IMR-90 (cell line): ENCODE measurements at regions of chr20 and their contacts with region 1.

Region 1: DNA sequence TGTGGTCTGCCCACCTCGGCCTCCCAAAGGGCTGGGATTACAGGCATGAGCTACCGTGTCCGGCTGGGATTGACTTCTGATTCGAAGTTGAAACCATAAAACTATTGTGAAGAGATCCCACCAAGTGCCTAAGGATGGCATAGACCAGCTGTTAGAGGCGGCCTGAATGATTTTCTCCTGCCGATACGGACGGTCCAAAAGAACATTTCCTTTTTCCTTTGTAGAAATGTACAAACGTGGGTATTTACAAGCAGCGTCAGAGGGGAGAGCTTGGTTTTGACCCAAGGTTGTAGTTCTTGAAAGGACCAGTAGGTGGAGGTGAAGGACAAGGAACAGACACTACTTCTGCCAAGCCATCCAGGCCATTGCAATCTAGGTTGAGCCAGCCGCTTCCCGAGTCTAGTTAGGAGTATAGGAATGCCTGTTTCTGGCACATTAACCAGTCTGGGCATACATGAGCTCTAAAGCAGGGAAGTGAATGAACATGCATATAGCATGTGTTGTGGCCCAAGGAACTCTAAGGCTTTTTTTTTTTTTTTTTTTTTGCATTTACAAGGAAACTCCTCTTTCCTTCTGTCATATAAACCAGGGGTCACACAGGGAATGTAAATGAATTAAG is 29.1 kb downstream of the MOCS3 start:
- DNase-seq: peak; percentile 90
- ATAC-seq: peak; percentile 99
- H3K4me3 ChIP-seq: no peak overlapping the region
- H3K27ac ChIP-seq: no peak overlapping the region
- H3K4me1 ChIP-seq: peaks cover 3% of the 10 kb centered on the region
- H3K27me3 ChIP-seq: no peaks in the 10 kb centered on the region
- CTCF ChIP-seq: peak; percentile 96
- POLR2A ChIP-seq: peak; percentile 53; the same call in 1 of the 2 replicates
- RAD21 ChIP-seq: peak; percentile 97

Region 2: DNA sequence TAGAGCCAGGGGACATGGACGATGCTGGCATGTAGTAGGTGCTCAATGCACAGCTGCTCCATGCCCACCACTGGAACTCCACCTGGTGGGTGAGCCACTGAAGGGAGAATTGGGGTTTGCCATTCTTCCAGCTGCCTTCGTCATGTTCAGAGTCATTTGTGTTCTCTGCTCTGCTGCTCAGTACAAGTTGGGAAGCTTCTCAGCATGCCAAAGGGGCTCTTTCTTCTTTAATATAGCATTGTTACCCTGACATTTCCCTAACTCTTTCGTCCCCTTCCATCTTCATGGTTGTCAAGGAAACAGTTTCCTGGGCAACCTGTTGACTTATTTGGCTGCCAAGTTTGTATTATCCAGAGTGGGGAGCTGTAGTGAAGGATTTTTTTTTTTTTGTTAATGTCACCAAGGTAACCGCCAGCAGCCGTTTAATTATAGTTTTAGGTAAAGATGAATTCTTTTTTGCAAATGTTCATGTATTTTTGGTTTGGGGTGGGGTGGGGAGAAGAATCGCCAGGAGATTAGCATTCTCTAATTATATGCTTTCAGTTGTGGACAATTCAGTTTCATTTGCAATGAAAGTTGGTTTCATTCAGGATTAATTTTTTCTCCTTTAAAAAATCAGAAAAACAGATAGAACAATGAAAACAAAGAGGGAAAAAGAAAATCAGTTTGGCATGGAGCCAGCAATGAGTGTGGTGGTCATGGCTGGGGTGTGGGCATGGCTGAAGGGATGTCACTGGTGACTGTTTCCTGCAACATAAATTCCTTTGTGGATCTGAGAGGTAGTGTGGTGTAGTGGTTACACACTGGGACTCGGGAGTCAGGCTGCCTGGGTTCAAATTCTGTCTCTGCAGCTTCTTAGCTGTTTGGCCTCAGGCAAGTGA is 108.2 kb after region 1 on chr20:
- CTCF ChIA-PET with region 1: no interaction called
- POLR2A ChIA-PET with region 1: no interaction called
- dilution Hi-C with region 1: no loop called
- in situ Hi-C with region 1: no loop called
- intact Hi-C with region 1: no loop called
- DNase-seq: no peak
- ATAC-seq: no peak
- H3K4me3 ChIP-seq: no peak overlapping the region
- H3K27ac ChIP-seq: no peak overlapping the region
- H3K4me1 ChIP-seq: no peaks in the 10 kb centered on the region
- H3K27me3 ChIP-seq: peaks cover 82% of the 10 kb centered on the region
- CTCF ChIP-seq: no peak
- POLR2A ChIP-seq: no peak
- RAD21 ChIP-seq: no peak

Region 3: GRCh38 chr20:51306503-51307358 is 319.0 kb after region 1 on chr20:
- CTCF ChIA-PET with region 1: interaction called, 50 read pairs
- POLR2A ChIA-PET with region 1: interaction called, 3 read pairs
- dilution Hi-C with region 1: no loop called
- in situ Hi-C with region 1: loop called (anchors 5 kb)
- intact Hi-C with region 1: loop called (anchors 1 kb)
- DNase-seq: peak; percentile 70
- ATAC-seq: peak; percentile 97
- H3K4me3 ChIP-seq: no peak overlapping the region
- H3K27ac ChIP-seq: no peak overlapping the region
- H3K4me1 ChIP-seq: peaks cover 5% of the 10 kb centered on the region; the same call in 1 of the 2 replicates
- H3K27me3 ChIP-seq: no peaks in the 10 kb centered on the region
- CTCF ChIP-seq: peak; percentile 94
- POLR2A ChIP-seq: no peak; the same call in 1 of the 2 replicates
- RAD21 ChIP-seq: peak; percentile 98

Region 4: DNA sequence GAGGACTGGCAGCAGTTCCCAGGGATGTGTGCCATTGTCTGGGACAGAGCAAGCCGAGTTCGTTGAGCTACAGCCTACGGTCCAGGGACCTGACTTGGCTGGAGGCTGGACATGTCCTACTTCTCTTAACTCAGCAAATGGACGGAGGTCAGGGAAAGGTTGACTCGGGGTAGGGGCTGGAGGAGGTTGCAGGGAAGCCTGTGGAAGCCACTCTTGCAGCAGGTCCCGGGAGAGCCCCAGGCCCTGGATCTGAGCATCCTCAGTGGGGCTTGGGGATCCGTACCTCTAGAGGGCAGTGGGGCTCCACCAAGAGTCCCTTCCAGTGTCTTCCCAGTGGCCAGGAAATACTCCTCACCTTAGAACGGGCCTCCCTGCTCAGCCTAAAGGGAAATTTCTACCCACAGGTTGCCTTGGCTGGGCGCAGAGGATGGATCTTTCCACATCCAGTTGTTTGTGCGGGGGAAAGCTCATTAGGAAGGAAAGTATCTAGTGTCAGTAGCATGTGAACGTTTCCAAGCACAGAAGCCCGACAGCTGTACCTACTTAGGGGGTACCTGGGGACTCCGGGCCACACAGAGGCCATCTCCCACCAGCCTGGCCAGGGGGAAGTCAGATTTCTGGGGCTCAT is 384.6 kb after region 1 on chr20:
- CTCF ChIA-PET with region 1: interaction called, 4 read pairs
- POLR2A ChIA-PET with region 1: no interaction called
- dilution Hi-C with region 1: no loop called
- in situ Hi-C with region 1: loop called (anchors 5 kb)
- intact Hi-C with region 1: no loop called
- DNase-seq: peak; percentile 74
- ATAC-seq: peak; percentile 98
- H3K4me3 ChIP-seq: no peak overlapping the region
- H3K27ac ChIP-seq: no peak overlapping the region; the same call in 1 of the 2 replicates
- H3K4me1 ChIP-seq: peaks cover 7% of the 10 kb centered on the region
- H3K27me3 ChIP-seq: no peaks in the 10 kb centered on the region
- CTCF ChIP-seq: peak; percentile 94
- POLR2A ChIP-seq: peak; percentile 48
- RAD21 ChIP-seq: peak; percentile 97

Region 5: GRCh38 chr20:51624157-51624731 is 636.5 kb after region 1 on chr20:
- CTCF ChIA-PET with region 1: no interaction called
- POLR2A ChIA-PET with region 1: no interaction called
- dilution Hi-C with region 1: no loop called
- in situ Hi-C with region 1: loop called (anchors 5 kb)
- intact Hi-C with region 1: loop called (anchors 2 kb)
- DNase-seq: peak; percentile 57
- ATAC-seq: peak; percentile 85
- H3K4me3 ChIP-seq: no peak overlapping the region
- H3K27ac ChIP-seq: no peak overlapping the region
- H3K4me1 ChIP-seq: no peaks in the 10 kb centered on the region
- H3K27me3 ChIP-seq: no peaks in the 10 kb centered on the region
- CTCF ChIP-seq: peak; percentile 67
- POLR2A ChIP-seq: no peak
- RAD21 ChIP-seq: peak; percentile 65

Region 6: DNA sequence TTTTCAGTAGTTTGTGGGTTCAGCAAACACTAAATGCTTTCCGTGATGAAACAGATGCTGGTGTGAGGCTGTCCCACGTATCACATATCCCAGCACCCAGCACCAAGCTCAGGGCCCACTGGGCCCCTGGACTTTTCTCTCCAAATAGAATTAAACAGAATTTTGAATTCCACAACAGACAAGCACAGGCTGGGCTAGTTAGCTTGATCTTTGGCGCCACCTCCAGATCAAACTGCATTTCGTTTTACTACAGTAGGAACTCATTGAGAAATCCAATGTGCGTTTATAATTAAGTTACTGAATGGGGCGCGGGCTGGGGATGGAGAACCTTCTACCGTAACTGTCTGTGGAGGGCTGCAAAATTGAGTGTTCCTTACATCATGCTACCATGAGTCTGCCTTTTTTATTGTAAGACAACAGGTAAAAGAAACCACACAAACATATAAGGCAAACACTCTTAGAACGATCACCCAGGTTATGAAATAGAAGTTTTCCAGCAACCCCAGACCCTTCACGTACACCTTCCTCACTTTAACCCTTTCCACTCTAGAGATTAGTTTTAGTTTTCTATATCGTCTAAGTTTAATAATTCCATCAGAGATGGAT is 1096.0 kb after region 1 on chr20:
- CTCF ChIA-PET with region 1: no interaction called
- POLR2A ChIA-PET with region 1: no interaction called
- dilution Hi-C with region 1: no loop called
- in situ Hi-C with region 1: loop called (anchors 25 kb)
- intact Hi-C with region 1: no loop called
- DNase-seq: peak; percentile 75
- ATAC-seq: peak; percentile 92
- H3K4me3 ChIP-seq: no peak overlapping the region
- H3K27ac ChIP-seq: no peak overlapping the region
- H3K4me1 ChIP-seq: no peaks in the 10 kb centered on the region
- H3K27me3 ChIP-seq: no peaks in the 10 kb centered on the region
- CTCF ChIP-seq: peak; percentile 88
- POLR2A ChIP-seq: 0 out of 2 replicates have a peak, but pooled peaks have one; percentile 36
- RAD21 ChIP-seq: peak; percentile 98